IMR-90 (cell line): ENCODE measurements at regions of chr10 and their contacts with region 1.

Region 1: GRCh38 chr10:28541717-28542365 is 8.9 kb downstream of the WAC start:
- DNase-seq: no peak
- ATAC-seq: no peak; the same call in 1 of the 2 replicates
- H3K4me3 ChIP-seq: no peak overlapping the region
- H3K27ac ChIP-seq: no peak overlapping the region
- H3K4me1 ChIP-seq: peaks cover 1% of the 10 kb centered on the region; the same call in 1 of the 2 replicates
- H3K27me3 ChIP-seq: no peaks in the 10 kb centered on the region
- CTCF ChIP-seq: no peak
- POLR2A ChIP-seq: no peak
- RAD21 ChIP-seq: no peak

Region 2: GRCh38 chr10:28569506-28570159 is 27.8 kb after region 1 on chr10:
- CTCF ChIA-PET with region 1: no interaction called
- POLR2A ChIA-PET with region 1: no interaction called
- dilution Hi-C with region 1: no loop called
- in situ Hi-C with region 1: no loop called
- intact Hi-C with region 1: loop called (anchors 5 kb)
- DNase-seq: peak; percentile 71
- ATAC-seq: peak; percentile 75
- H3K4me3 ChIP-seq: no peak overlapping the region
- H3K27ac ChIP-seq: peak overlapping the region; percentile 65; the same call in 1 of the 2 replicates
- H3K4me1 ChIP-seq: peaks cover 6% of the 10 kb centered on the region; the same call in 1 of the 2 replicates
- H3K27me3 ChIP-seq: no peaks in the 10 kb centered on the region
- CTCF ChIP-seq: no peak
- POLR2A ChIP-seq: no peak
- RAD21 ChIP-seq: no peak

Region 3: DNA sequence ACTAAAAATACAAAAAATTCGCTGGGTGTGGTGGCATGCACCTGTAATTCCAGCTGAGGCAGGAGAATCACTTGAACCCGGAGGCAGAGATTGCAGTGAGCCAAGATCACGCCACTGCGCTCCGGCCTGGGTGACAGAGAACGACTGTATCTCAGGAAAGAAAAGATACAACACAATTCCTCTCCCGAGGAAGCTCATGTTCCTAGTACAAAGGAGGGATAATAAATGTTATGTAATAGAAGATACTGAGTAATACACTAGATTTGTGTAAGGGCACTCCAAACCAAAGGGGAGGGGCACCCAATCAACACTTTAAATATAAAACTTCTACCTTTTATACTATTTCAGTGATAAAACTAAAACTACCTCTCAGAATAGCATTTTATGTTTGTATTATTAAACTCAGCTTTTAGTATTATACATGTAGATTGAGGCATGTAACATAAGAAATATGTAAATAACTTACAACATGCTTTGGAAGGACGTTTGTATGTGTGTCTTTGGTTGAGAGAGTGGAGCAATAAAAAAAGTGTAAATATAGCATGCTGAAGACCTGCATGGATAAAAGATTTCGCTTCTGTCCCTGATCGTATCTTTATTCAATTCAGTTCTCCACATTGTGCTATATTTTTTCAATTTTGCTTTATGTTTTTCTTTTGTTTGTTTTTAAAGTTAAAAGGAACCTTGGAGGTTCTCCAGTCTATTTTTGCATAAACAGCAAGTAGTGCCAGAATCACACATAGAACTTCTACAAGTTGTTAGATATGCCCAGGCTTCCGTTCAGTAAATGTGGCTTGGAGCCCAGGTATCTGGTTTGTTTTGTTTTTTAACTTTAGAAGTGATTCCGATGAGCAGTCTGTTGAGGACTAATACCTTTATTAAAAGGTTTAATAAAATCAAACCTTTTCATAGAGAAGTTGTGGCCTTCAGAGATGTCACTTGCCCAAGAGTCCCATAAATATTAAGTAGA is 63.0 kb after region 1 on chr10:
- CTCF ChIA-PET with region 1: no interaction called
- POLR2A ChIA-PET with region 1: no interaction called
- dilution Hi-C with region 1: no loop called
- in situ Hi-C with region 1: no loop called
- intact Hi-C with region 1: loop called (anchors 5 kb)
- DNase-seq: no peak
- ATAC-seq: no peak
- H3K4me3 ChIP-seq: no peak overlapping the region
- H3K27ac ChIP-seq: no peak overlapping the region
- H3K4me1 ChIP-seq: no peaks in the 10 kb centered on the region
- H3K27me3 ChIP-seq: no peaks in the 10 kb centered on the region
- CTCF ChIP-seq: no peak
- POLR2A ChIP-seq: no peak
- RAD21 ChIP-seq: no peak